Ascending aorta (tissue), 2 donors: ENCODE measurements at regions of chr1 and their contacts with region 1.

Region 1: GRCh38 chr1:181088079-181089016 is at the start of gene IER5:
- DNase-seq: peak; percentile 91 to 98
- H3K4me3 ChIP-seq: peak within 1 kb of the TSS; percentile 89 to 97
- H3K27ac ChIP-seq: peak within 1 kb of the TSS; percentile 94 to 97
- H3K4me1 ChIP-seq: peaks cover 4 to 11% of the 10 kb centered on the region in 2 donors
- H3K27me3 ChIP-seq: no peaks in the 10 kb centered on the region
- CTCF ChIP-seq: peak in 1 of 3 experiments; percentile 9
- total RNA-seq, gene IER5: 47.9 TPM

Region 2: GRCh38 chr1:180231506-180231921 is 856.8 kb before region 1 on chr1:
- intact Hi-C with region 1: no loop called
- DNase-seq: no peak
- H3K4me3 ChIP-seq: peak overlapping the region; percentile 62 to 71
- H3K27ac ChIP-seq: no peak overlapping the region
- H3K4me1 ChIP-seq: peaks cover 24 to 47% of the 10 kb centered on the region in 2 donors
- H3K27me3 ChIP-seq: peaks cover 61% of the 10 kb centered on the region
- CTCF ChIP-seq: no peak

Region 3: GRCh38 chr1:180527101-180527669 is 561.2 kb before region 1 on chr1:
- intact Hi-C with region 1: loop called (anchors 5 kb)
- DNase-seq: no peak
- H3K4me3 ChIP-seq: no peak overlapping the region
- H3K27ac ChIP-seq: peak overlapping the region; percentile 80 to 83
- H3K4me1 ChIP-seq: peaks cover 13 to 37% of the 10 kb centered on the region in 2 donors
- H3K27me3 ChIP-seq: no peaks in the 10 kb centered on the region
- CTCF ChIP-seq: no peak

Region 4: GRCh38 chr1:181021811-181022434 is 66.4 kb before region 1 on chr1:
- intact Hi-C with region 1: loop called (anchors 2 kb)
- DNase-seq: peak in 1 of 2 donors; percentile 82
- H3K4me3 ChIP-seq: peak overlapping the region; percentile 80 to 83
- H3K27ac ChIP-seq: peak overlapping the region; percentile 81 to 88
- H3K4me1 ChIP-seq: peaks cover 0 to 9% of the 10 kb centered on the region in 2 donors
- H3K27me3 ChIP-seq: no peaks in the 10 kb centered on the region
- CTCF ChIP-seq: no peak

Region 5: DNA sequence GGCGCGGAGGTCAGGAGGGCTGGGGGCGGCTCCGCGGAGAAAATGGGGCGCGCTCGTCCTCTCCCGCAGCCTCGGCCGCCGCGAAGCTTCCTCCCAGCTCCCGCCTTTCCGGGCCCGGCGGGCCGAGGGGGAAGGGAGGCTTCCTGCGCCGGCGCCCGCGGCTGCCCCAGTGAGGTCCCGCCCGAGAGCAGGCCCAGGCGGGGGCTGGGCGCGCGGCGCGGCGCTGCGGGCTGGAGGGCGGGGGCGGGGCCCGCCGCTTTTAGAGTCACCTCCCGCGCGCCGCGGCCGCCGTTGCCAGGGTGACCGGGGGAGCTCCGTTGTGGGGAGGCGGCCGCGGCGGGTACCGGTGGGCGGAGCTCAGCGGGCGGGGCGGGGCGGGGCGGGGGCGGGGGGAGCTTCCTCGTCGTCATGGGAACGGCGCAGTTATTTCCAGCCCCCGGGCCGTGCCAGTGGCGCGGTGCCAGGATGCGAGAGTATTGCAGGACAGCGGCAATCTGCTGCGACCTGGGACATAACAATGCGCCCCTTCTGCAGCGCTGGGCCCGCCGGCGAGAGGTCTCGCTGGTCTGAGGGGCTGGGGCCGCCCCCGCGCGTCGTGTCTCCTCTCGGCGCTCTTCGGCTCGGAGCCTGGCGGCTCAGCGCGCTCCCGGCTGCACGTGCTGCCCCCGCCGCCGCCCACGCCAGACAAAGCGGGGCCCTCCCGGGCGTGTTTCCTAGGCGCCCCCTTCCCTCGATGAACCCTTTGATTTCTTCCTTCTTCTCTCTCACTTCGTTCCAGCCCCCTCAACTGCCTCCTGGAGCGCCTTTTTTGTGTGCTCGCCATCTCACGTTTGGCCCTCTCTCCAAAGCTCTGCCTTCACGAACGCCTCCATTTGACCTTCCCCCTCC is 17.0 kb after region 1 on chr1:
- intact Hi-C with region 1: loop called (anchors 1 kb)
- DNase-seq: peak; percentile 85 to 98
- H3K4me3 ChIP-seq: peak overlapping the region; percentile 90 to 98
- H3K27ac ChIP-seq: peak overlapping the region; percentile 91 to 92
- H3K4me1 ChIP-seq: peaks cover 3 to 19% of the 10 kb centered on the region in 2 donors
- H3K27me3 ChIP-seq: no peaks in the 10 kb centered on the region
- CTCF ChIP-seq: no peak

Region 6: DNA sequence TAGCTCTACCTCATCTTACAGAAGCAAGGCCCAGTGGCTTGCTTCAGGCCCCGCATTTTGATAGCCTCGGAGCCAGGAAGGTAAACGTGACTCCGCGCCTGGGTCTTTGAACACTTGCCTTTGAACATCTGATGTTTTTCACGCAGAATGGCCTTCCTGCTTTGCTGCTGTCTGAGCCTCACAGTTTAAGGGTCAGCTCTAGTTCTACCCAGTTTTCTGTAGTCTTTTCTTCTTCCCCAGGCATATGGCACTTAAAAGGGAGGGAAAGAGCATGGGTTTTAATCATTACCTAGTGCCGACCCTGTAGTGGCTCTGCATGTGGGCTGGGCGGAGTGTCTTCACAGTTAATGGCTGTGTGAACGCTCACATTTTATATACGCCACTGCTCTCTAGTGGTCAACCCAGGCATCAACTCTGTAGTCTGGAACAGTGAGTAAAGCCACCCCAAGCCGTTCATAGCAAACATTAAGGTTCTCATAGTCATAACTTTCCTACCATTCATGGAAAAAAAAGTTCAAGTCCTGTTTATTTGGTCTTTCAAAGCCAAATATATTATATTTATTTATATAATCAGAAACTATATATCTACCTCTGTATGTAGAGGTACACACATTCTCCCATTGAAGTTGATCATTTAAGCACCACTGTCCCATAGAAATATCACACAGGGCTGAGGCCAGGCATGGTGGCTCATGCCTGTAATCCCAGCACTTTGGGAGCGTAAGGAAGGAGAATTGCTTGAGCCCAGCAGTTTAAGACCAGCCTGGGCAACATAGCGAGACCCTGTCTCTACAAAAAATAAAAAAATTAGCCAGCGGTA is 78.2 kb after region 1 on chr1:
- intact Hi-C with region 1: loop called (anchors 1 kb)
- DNase-seq: peak in 1 of 2 donors; percentile 83
- H3K4me3 ChIP-seq: no peak overlapping the region
- H3K27ac ChIP-seq: no peak overlapping the region
- H3K4me1 ChIP-seq: peaks cover 0 to 2% of the 10 kb centered on the region in 2 donors
- H3K27me3 ChIP-seq: no peaks in the 10 kb centered on the region
- CTCF ChIP-seq: peak; percentile 83 to 85 (median 84)

Region 7: DNA sequence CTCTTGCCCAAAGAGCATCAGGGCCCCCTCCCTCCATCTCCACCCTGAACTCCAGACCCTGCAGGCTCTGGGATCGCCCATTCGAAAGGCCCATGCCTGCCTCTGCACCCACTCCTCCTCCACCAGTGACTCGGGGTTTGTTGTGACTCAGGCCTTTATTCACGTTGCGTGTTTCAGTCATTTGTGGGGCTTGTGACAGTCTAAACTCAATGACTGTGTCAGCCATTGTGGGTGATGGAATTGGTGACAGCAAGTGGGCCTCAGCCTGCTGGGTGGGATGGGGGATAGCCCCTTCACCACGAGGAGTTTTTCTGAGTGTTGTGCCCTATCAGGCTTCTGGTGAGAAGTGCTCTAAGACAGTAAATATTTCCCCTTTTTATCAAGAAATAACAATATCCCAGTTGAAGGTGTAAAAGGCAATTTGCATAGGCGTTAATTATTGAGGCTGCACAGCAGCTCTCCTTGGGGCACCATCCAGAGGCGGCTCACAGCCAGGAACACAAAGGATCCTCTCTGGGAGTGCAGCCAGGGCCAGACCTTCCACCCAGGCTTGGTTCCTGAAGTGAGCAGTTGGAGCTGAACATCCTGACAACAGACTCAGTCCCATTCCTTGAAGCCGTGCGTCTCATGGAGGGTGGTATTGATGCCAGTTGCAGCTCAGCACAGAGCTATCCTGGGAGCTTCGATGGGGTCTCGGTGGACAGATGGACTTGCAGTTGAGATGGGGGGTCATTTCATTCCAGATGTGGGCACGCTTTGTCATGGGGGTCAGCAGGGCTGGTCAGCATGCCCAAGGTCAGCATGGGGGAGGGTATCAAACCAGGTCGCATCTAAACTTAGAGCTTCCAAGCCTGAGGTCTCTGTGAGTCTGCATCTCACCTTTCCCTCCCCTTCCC is 259.4 kb after region 1 on chr1:
- intact Hi-C with region 1: no loop called
- DNase-seq: no peak
- H3K4me3 ChIP-seq: no peak overlapping the region
- H3K27ac ChIP-seq: no peak overlapping the region
- H3K4me1 ChIP-seq: no peaks in the 10 kb centered on the region
- H3K27me3 ChIP-seq: no peaks in the 10 kb centered on the region
- CTCF ChIP-seq: no peak